Endothelial cell of umbilical vein (primary cell): ENCODE measurements at regions of chr4 and their contacts with region 1.

Region 1: GRCh38 chr4:3047464-3048286 is 26.7 kb downstream of the HTT-AS start:
- DNase-seq: peak; percentile 51
- H3K4me3 ChIP-seq: no peak overlapping the region
- H3K27ac ChIP-seq: no peak overlapping the region
- H3K4me1 ChIP-seq: no peaks in the 10 kb centered on the region
- H3K27me3 ChIP-seq: no peaks in the 10 kb centered on the region
- CTCF ChIP-seq: peak; percentile 52 to 79
- POLR2A ChIP-seq: no peak

Region 2: DNA sequence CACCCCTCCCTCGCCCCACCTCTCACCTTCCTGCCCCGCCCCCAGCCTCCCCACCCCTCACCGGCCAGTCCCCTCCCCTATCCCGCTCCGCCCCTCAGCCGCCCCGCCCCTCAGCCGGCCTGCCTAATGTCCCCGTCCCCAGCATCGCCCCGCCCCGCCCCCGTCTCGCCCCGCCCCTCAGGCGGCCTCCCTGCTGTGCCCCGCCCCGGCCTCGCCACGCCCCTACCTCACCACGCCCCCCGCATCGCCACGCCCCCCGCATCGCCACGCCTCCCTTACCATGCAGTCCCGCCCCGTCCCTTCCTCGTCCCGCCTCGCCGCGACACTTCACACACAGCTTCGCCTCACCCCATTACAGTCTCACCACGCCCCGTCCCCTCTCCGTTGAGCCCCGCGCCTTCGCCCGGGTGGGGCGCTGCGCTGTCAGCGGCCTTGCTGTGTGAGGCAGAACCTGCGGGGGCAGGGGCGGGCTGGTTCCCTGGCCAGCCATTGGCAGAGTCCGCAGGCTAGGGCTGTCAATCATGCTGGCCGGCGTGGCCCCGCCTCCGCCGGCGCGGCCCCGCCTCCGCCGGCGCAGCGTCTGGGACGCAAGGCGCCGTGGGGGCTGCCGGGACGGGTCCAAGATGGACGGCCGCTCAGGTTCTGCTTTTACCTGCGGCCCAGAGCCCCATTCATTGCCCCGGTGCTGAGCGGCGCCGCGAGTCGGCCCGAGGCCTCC is 26.6 kb after region 1 on chr4 and contains the starts of genes HTT and HTT-AS:
- CTCF ChIA-PET with region 1: interaction called, 4 read pairs
- POLR2A ChIA-PET with region 1: no interaction called
- dilution Hi-C with region 1: no loop called
- intact Hi-C with region 1: loop called (anchors 1 kb)
- DNase-seq: peak; percentile 97
- H3K4me3 ChIP-seq: peak within 1 kb of the TSS; percentile 64 to 86 (median 79)
- H3K27ac ChIP-seq: peak within 1 kb of the TSS; percentile 78
- H3K4me1 ChIP-seq: peaks cover 13% of the 10 kb centered on the region
- H3K27me3 ChIP-seq: no peaks in the 10 kb centered on the region
- CTCF ChIP-seq: peak in 1 of 2 donors; percentile 13
- POLR2A ChIP-seq: peak; percentile 70
- total RNA-seq, gene HTT: 61.2 and 63.2 TPM in 2 replicates
- total RNA-seq, gene HTT-AS: not detected in 2 replicates

Region 3: DNA sequence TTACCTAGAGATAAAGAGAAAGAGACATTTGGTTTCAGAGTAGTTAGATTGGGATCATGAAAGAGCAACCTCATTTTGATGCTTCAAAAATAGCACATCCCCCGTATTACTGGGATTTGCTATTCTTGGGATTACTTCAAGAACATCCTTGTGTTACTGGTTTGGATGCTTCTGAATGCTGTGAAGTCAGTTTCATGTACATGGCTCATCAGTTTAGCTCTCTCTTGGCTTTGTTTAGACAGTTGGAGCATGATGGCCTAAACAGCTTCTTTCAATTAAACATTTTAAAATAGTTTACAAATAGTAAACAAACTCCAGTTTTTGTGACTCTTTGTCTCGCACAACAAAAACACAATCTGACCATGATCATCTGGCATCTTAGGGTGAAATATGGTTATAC is 50.7 kb after region 1 on chr4:
- CTCF ChIA-PET with region 1: no interaction called
- POLR2A ChIA-PET with region 1: no interaction called
- dilution Hi-C with region 1: no loop called
- intact Hi-C with region 1: no loop called
- DNase-seq: no peak
- H3K4me3 ChIP-seq: no peak overlapping the region
- H3K27ac ChIP-seq: no peak overlapping the region
- H3K4me1 ChIP-seq: no peaks in the 10 kb centered on the region
- H3K27me3 ChIP-seq: no peaks in the 10 kb centered on the region
- CTCF ChIP-seq: no peak
- POLR2A ChIP-seq: no peak